ENCODE measurements at regions of chr6 and their contacts with region 1.

Region 1: GRCh38 chr6:75208298-75209183 is 2.7 kb upstream of the COL12A1 start:
- DNase-seq: peak; percentile 82 to 91 (median 91)
- H3K4me3 ChIP-seq: no peak overlapping the region
- H3K27ac ChIP-seq: no peak overlapping the region
- H3K4me1 ChIP-seq: peaks cover 1% of the 10 kb centered on the region
- H3K27me3 ChIP-seq: no peaks in the 10 kb centered on the region
- CTCF ChIP-seq: peak; percentile 78 to 89 (median 83)
- EP300 ChIP-seq: no peak
- POLR2A ChIP-seq: no peak

Region 2: GRCh38 chr6:73739096-73739495 is 1469.4 kb before region 1 on chr6:
- intact Hi-C with region 1: loop called in 3 of 4 experiments (anchors 2 to 10 kb)
- DNase-seq: no peak
- H3K4me3 ChIP-seq: no peak overlapping the region
- H3K27ac ChIP-seq: no peak overlapping the region
- H3K4me1 ChIP-seq: no peaks in the 10 kb centered on the region
- H3K27me3 ChIP-seq: no peaks in the 10 kb centered on the region
- CTCF ChIP-seq: peak; percentile 53 to 67 (median 59)
- EP300 ChIP-seq: no peak
- POLR2A ChIP-seq: no peak

Region 3: DNA sequence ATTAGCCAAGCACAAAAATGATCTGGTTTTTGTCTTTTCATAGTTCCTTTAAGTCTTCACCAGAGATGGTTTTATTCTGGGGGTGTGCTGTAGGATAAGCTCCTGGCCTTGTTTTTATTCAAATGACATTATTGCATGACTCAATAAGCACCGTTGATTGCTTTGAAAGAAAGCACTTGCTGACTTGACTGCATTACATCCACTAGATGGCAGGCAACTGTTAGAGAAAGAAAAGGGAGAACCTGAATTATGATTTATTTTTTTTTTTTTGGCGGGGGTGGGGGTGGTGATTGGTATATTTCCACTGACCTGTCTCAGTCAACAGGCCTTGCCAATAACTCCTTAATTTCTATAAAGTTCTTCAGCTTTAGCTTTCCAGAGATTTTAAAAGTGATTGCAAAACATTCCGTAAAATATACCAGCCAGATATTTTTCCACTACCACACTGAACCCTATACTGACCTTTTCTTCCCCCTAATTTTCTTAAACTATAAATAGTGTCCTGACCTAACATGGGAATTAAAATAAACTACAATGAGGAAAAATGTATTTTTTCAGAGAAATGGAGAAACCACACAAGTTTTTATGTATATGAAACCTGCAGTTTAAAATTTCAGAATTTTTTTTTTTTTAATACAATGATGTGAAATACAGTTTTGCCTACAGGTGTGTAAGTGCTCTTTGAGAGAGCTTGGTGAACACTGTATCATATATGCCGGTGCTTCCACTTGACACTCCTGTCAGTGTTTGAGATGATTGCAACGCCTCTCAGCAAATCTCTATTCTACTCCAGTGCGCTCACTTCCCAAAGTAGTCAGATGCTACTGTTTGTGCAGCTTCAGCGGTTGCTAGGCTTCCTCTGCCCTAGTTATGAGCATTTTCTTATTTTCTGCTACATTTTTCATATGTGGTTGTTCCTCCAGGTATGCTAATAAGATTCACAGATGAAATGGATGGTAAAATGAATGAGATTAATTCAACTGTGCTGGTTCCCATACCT is 1238.3 kb before region 1 on chr6:
- intact Hi-C with region 1: loop called in 2 of 4 experiments (anchors 5 to 10 kb)
- DNase-seq: no peak
- H3K4me3 ChIP-seq: no peak overlapping the region
- H3K27ac ChIP-seq: no peak overlapping the region
- H3K4me1 ChIP-seq: no peaks in the 10 kb centered on the region
- H3K27me3 ChIP-seq: no peaks in the 10 kb centered on the region
- CTCF ChIP-seq: peak in 2 of 3 donors; percentile 10 to 13
- EP300 ChIP-seq: no peak
- POLR2A ChIP-seq: no peak

Region 4: DNA sequence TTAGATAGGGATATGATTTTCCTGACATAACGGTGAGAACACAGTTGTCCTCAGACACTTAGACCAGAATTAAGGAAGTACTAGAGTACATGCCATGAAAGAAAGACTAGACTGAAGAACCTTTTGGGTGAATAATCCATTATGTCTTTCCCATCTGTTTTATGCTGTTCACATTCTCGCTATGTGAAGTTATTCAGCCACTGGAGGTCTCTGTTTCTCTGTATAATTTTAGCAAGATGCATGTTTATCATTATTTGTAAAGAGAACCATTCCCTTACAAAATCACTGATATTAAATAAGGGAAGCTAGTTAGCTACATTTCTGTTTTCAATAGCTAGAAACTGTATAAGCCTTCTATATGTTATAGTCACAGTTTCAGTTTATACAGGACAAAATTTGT is 1120.6 kb before region 1 on chr6:
- intact Hi-C with region 1: loop called in 1 of 4 experiments (anchors 5 kb)
- DNase-seq: no peak
- H3K4me3 ChIP-seq: no peak overlapping the region
- H3K27ac ChIP-seq: no peak overlapping the region
- H3K4me1 ChIP-seq: no peaks in the 10 kb centered on the region
- H3K27me3 ChIP-seq: no peaks in the 10 kb centered on the region
- CTCF ChIP-seq: peak in 1 of 3 donors; percentile 13
- EP300 ChIP-seq: no peak
- POLR2A ChIP-seq: no peak

Region 5: GRCh38 chr6:74735304-74735703 is 473.2 kb before region 1 on chr6:
- intact Hi-C with region 1: loop called in 1 of 4 experiments (anchors 10 kb)
- DNase-seq: peak in 2 of 5 donors; percentile 9 to 59
- H3K4me3 ChIP-seq: no peak overlapping the region
- H3K27ac ChIP-seq: peak overlapping the region in 1 of 2 donors; percentile 61
- H3K4me1 ChIP-seq: peaks cover 3% of the 10 kb centered on the region
- H3K27me3 ChIP-seq: no peaks in the 10 kb centered on the region
- CTCF ChIP-seq: no peak
- EP300 ChIP-seq: peak; percentile 45
- POLR2A ChIP-seq: no peak

Region 6: GRCh38 chr6:74991573-74992332 is 216.8 kb before region 1 on chr6:
- intact Hi-C with region 1: loop called in 1 of 4 experiments (anchors 5 kb)
- DNase-seq: no peak
- H3K4me3 ChIP-seq: no peak overlapping the region
- H3K27ac ChIP-seq: no peak overlapping the region
- H3K4me1 ChIP-seq: peaks cover 1% of the 10 kb centered on the region
- H3K27me3 ChIP-seq: no peaks in the 10 kb centered on the region
- CTCF ChIP-seq: no peak
- EP300 ChIP-seq: no peak
- POLR2A ChIP-seq: no peak